ENCODE measurements at regions of chr1 and their contacts with region 1.

Region 1: DNA sequence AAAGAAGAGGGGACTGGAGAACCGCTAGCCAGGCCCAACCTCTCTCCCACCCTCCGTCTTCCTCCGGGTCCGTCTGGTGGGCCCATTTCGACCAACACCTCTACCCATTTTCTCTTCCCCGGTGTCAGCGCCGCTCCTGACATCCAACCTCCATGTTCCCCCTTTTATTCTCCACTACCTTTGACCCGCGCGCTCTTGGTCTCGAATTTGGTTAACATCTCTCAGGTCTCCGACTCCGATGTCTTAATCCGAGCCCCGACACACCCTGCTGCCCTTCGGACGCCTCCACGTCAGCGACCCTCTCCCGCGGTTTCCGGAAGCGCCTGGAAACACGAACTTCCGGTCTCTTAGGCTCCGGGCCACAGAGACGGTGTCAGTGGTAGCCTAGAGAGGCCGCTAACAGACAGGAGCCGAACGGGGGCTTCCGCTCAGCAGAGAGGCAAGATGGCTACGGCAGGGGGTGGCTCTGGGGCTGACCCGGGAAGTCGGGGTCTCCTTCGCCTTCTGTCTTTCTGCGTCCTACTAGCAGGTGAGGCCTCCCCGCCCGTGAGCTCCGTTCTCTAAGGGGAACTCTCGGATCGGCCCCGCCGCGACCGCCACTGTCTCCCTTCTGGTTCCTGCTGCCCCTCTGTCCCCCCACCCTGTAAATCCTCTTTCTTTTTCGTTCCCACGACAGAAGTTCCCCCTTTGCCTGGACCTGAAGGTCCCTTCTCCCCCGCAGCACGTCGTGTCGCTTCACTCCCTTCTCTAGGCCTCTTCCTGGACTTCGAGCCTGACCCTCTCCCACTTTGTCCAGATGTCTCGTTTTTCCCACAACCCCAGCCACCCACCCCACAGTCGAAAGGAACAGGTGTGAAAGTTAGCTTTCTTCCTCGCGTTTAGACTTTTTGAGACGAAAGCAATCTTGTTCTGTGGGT is at the starts of genes COPA and NCSTN:
- DNase-seq: peak; percentile 92
- ATAC-seq: peak; percentile 99 to 100
- H3K4me3 ChIP-seq: peak within 1 kb of the TSS; percentile 77 to 96 (median 86)
- H3K27ac ChIP-seq: peak within 1 kb of the TSS; percentile 89 to 96 (median 96)
- H3K4me1 ChIP-seq: peaks cover 30 to 39% of the 10 kb centered on the region in 2 donors
- H3K27me3 ChIP-seq: no peaks in the 10 kb centered on the region
- CTCF ChIP-seq: peak in 2 of 5 experiments; percentile 24 to 31
- POLR2A ChIP-seq: peak; percentile 86 to 93
- total RNA-seq, gene COPA: 59.0 to 103 (median 85.9) TPM
- total RNA-seq, gene NCSTN: 29.2 to 59.3 (median 33.2) TPM

Region 2: DNA sequence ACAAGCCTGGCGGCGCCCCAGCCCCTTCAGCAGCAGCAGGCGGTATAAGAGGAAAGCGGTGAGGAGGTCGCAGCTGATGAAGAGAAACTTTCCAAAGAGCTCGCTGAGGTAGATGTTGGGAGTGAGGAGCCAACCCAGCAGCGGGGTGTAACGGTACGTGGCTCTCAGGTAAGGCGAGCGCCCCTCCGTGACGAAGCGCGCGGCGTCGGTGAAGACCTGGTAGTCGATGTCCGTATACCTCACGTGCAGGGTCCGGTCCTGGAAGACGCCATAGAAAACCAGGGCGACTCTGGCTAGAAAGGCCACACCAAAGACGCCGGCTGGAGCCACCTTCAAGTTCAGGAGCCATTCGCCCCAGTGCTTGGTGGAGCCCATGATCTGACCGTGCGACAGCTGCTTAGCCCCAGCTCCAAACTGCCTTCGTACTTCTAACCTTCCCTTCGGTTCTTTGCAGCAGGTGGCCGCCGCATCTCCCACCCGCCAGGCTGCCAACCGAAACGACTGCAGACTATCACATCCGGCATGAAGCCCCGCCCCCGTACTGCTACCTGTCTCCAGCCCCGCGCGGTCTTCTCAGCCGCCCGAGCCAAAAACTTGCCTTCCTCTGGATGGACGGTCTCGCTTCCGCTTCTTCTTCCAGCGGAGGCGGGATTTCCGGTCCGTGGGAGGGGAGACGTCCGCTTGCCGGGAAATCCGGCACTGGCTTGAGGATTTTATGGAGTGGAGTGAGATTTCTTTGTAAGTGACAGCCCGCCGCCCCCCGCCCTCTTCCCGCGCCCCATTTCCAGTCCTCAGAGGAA is 311.6 kb before region 1 on chr1 and contains the start of gene PIGM:
- in situ Hi-C with region 1: no loop called
- intact Hi-C with region 1: loop called (anchors 5 kb)
- DNase-seq: peak; percentile 90 to 94
- ATAC-seq: peak; percentile 97
- H3K4me3 ChIP-seq: peak within 1 kb of the TSS; percentile 80 to 94 (median 88)
- H3K27ac ChIP-seq: peak within 1 kb of the TSS; percentile 74 to 88 (median 81)
- H3K4me1 ChIP-seq: peaks cover 18 to 23% of the 10 kb centered on the region in 2 donors
- H3K27me3 ChIP-seq: no peaks in the 10 kb centered on the region
- CTCF ChIP-seq: no peak
- POLR2A ChIP-seq: peak in 1 of 2 donors; percentile 57
- total RNA-seq, gene PIGM: 0.55 to 0.75 (median 0.72) TPM

Region 3: DNA sequence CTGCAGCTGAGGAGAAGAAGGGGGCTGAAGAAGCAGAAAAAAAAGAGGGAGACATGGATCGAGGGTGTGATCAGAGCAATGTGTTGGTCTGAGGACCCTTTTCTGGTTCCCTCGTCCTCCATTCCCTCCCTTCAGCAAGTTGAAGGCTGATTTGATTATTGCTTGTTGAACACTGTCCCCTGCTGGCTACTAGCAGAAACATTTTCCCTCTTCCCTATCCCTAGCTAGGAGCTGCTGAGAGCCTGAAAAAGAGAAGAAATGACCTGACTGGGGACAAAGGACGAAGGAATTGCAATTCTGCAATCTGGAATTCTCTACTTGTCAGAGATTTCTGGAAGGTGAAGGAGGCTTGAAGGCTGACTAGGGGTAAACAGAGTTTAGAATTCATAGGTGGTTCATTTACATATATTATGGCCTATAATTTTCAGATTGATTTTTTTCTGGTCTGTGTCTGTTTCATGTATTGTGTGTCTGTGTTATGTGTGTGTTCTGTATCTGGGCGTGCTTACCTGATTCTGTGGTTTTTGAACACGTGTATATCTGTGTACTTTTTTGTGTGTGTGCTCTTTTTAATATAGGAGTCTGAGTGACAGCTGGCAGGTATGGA is 33.4 kb after region 1 on chr1:
- in situ Hi-C with region 1: no loop called
- intact Hi-C with region 1: loop called (anchors 5 kb)
- DNase-seq: no peak
- ATAC-seq: peak; percentile 85 to 96
- H3K4me3 ChIP-seq: no peak overlapping the region
- H3K27ac ChIP-seq: no peak overlapping the region
- H3K4me1 ChIP-seq: peaks cover 0 to 9% of the 10 kb centered on the region in 2 donors
- H3K27me3 ChIP-seq: no peaks in the 10 kb centered on the region
- CTCF ChIP-seq: peak; percentile 83 to 96 (median 87)
- POLR2A ChIP-seq: no peak

Region 4: GRCh38 chr1:161159087-161159912 is 816.1 kb after region 1 on chr1 and contains the start of gene USP21:
- in situ Hi-C with region 1: no loop called
- intact Hi-C with region 1: loop called (anchors 10 kb)
- DNase-seq: peak; percentile 88 to 89
- ATAC-seq: peak; percentile 96 to 97
- H3K4me3 ChIP-seq: peak within 1 kb of the TSS; percentile 82 to 100 (median 95)
- H3K27ac ChIP-seq: peak within 1 kb of the TSS; percentile 90 to 95 (median 92)
- H3K4me1 ChIP-seq: peaks cover 25 to 31% of the 10 kb centered on the region in 2 donors
- H3K27me3 ChIP-seq: no peaks in the 10 kb centered on the region
- CTCF ChIP-seq: peak in 2 of 5 experiments; percentile 10 to 32
- POLR2A ChIP-seq: peak; percentile 47 to 54
- total RNA-seq, gene USP21: 16.5 to 20.8 (median 18.0) TPM

Region 5: DNA sequence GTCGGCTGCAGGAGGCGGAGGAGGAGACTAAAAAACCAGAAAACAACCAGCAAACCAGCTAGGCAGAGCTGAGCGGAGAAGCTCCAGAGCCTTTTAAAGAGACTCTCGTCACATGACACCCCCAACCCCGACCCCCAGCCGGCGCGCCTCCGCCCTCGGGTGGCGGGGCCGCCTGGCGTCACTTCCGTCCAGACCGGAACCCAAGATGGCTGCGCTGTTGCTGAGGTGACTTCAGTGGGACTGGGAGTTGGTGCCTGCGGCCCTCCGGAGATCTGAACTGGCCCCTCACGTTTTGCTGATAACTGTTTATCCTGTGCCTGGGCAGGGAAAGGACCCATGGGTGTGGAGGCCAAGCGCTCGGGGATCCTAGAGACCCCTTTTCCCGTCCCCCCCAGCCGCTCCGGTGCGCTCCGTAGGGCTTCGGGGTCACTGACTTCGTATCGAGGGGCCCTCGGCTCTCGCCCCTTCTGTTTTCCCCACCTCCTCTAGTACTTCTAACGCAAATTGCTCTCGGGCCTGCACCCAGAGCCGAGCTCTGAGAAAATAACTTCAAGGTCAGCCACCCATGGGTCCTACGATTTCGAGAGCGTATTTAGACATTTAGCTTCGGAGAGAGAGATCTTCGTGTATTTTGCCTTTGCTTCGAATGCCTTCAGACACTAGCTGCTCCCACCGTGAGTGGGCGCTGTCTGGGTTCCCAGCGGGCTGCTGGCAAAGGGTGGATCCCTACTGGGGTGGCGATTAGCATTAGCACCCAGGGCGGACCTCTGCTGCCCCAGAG is 971.2 kb after region 1 on chr1 and contains the start of gene SDHC:
- in situ Hi-C with region 1: no loop called
- intact Hi-C with region 1: loop called (anchors 5 kb)
- DNase-seq: peak; percentile 77 to 87
- ATAC-seq: peak; percentile 96 to 97
- H3K4me3 ChIP-seq: peak within 1 kb of the TSS; percentile 75 to 99 (median 93)
- H3K27ac ChIP-seq: peak within 1 kb of the TSS; percentile 95 to 99 (median 96)
- H3K4me1 ChIP-seq: peaks cover 19 to 20% of the 10 kb centered on the region in 2 donors
- H3K27me3 ChIP-seq: no peaks in the 10 kb centered on the region
- CTCF ChIP-seq: peak in 3 of 5 experiments; percentile 14 to 31 (median 22)
- POLR2A ChIP-seq: peak; percentile 82 to 83
- total RNA-seq, gene SDHC: 47.5 to 112 (median 63.8) TPM

Region 6: GRCh38 chr1:161749509-161750407 is 1406.5 kb after region 1 on chr1 and contains the start of gene DUSP12:
- in situ Hi-C with region 1: loop called in 1 of 4 experiments (anchors 25 kb)
- intact Hi-C with region 1: no loop called
- DNase-seq: peak; percentile 87 to 89
- ATAC-seq: peak; percentile 98 to 99
- H3K4me3 ChIP-seq: peak within 1 kb of the TSS; percentile 66 to 96 (median 92)
- H3K27ac ChIP-seq: peak within 1 kb of the TSS; percentile 77 to 89 (median 82)
- H3K4me1 ChIP-seq: peaks cover 7 to 19% of the 10 kb centered on the region in 2 donors
- H3K27me3 ChIP-seq: no peaks in the 10 kb centered on the region
- CTCF ChIP-seq: no peak
- POLR2A ChIP-seq: peak in 1 of 2 donors; percentile 16
- total RNA-seq, gene DUSP12: 5.0 to 15.0 (median 10.0) TPM